Ovary (tissue), 10 donors: ENCODE measurements at regions of chr5 and their contacts with region 1.

Region 1: GRCh38 chr5:171445644-171446516 is 26.4 kb downstream of the FGF18 start:
- DNase-seq: peak in 1 of 5 donors; percentile 32
- H3K4me3 ChIP-seq: no peak overlapping the region
- H3K27ac ChIP-seq: no peak overlapping the region
- H3K4me1 ChIP-seq: no peaks in the 10 kb centered on the region
- H3K27me3 ChIP-seq: no peaks in the 10 kb centered on the region
- CTCF ChIP-seq: no peak
- EP300 ChIP-seq: no peak
- POLR2A ChIP-seq: no peak

Region 2: GRCh38 chr5:171580502-171581265 is 134.8 kb after region 1 on chr5:
- intact Hi-C with region 1: loop called in 1 of 4 experiments (anchors 10 kb)
- DNase-seq: peak in 2 of 5 donors; percentile 30 to 47
- H3K4me3 ChIP-seq: no peak overlapping the region
- H3K27ac ChIP-seq: no peak overlapping the region
- H3K4me1 ChIP-seq: no peaks in the 10 kb centered on the region
- H3K27me3 ChIP-seq: no peaks in the 10 kb centered on the region
- CTCF ChIP-seq: no peak
- EP300 ChIP-seq: no peak
- POLR2A ChIP-seq: no peak